ENCODE measurements at regions of chr1 and their contacts with region 1.

Region 1: DNA sequence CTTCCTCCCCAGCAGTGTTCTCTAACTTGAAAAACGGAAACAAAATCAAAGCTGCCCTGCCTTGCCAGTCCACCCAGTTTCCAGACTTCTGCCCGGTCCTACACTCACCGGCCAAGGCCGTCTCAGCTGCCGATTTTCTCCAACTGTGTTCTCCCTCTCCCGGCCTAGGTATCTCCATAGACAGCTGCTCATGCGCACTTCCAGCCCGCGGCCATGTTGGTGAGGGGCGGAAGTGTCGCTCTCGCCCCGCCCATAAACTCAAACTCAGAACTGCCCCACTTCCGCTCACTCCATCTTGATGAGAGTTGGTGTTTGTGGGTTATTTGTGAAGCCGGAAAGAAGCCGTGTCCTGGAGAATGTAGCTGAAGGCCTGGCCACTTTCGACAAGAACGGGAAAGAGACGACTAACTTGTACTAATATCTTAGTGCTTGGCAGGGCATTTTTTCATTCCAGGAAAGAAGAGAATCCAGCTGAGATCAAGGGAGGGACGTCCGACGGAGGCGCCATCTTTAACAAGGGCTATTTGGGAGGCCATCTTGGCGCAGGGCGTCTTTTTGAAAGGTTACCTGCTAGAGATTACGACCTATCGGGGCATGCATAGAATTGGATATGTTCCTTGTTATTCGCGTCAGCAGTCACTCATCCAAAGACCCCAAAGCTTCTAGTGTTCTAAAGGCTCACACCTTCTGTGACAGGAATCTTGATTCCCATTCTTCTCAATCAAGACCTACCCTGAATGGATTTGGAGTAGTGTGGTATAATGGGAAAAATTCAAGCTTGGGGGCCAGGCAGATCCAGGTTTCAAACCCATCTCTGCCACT is at the start of gene USF1:
- DNase-seq: peak; percentile 92
- H3K4me3 Mint-ChIP-seq: peak within 1 kb of the TSS; percentile 94
- H3K27ac Mint-ChIP-seq: peak within 1 kb of the TSS; percentile 97
- H3K4me1 Mint-ChIP-seq: peaks cover 55% of the 10 kb centered on the region
- H3K27me3 Mint-ChIP-seq: no peaks in the 10 kb centered on the region
- total RNA-seq, gene USF1: 50.6 and 51.5 TPM in 2 replicates

Region 2: GRCh38 chr1:159924981-159925712 is 1120.8 kb before region 1 on chr1 and contains the start of gene TAGLN2:
- intact Hi-C with region 1: loop called (anchors 10 kb)
- DNase-seq: peak; percentile 92
- H3K4me3 Mint-ChIP-seq: peak within 1 kb of the TSS; percentile 94
- H3K27ac Mint-ChIP-seq: peak within 1 kb of the TSS; percentile 99
- H3K4me1 Mint-ChIP-seq: peaks cover 57% of the 10 kb centered on the region
- H3K27me3 Mint-ChIP-seq: peaks cover 1% of the 10 kb centered on the region
- total RNA-seq, gene TAGLN2: 442 and 461 TPM in 2 replicates

Region 3: DNA sequence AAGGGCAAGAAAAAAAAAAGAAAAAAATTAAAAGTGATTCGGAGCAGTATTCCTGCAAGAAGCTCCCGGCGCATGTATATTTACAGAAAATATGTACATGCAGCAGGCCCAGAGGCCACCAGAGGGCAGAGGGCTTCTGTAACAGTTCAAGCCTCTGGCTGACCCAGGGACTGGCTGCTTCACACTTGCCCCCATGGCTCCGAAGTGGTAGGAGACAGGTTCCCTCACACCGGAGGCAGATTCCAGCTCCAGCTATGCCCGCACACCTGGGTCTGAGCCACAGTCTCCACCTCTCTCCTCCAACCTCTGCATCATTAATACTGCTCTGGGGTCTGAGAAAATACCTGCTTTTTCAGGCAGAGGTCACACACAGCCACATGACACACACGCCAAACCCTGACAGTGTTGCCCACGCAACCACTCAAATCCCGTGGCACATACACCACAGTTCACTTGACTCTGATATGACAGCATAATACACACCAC is 26.0 kb after region 1 on chr1:
- intact Hi-C with region 1: loop called (anchors 1 kb)
- DNase-seq: peak; percentile 24
- H3K4me3 Mint-ChIP-seq: no peak overlapping the region
- H3K27ac Mint-ChIP-seq: peak overlapping the region; percentile 47
- H3K4me1 Mint-ChIP-seq: peaks cover 49% of the 10 kb centered on the region
- H3K27me3 Mint-ChIP-seq: no peaks in the 10 kb centered on the region

Region 4: DNA sequence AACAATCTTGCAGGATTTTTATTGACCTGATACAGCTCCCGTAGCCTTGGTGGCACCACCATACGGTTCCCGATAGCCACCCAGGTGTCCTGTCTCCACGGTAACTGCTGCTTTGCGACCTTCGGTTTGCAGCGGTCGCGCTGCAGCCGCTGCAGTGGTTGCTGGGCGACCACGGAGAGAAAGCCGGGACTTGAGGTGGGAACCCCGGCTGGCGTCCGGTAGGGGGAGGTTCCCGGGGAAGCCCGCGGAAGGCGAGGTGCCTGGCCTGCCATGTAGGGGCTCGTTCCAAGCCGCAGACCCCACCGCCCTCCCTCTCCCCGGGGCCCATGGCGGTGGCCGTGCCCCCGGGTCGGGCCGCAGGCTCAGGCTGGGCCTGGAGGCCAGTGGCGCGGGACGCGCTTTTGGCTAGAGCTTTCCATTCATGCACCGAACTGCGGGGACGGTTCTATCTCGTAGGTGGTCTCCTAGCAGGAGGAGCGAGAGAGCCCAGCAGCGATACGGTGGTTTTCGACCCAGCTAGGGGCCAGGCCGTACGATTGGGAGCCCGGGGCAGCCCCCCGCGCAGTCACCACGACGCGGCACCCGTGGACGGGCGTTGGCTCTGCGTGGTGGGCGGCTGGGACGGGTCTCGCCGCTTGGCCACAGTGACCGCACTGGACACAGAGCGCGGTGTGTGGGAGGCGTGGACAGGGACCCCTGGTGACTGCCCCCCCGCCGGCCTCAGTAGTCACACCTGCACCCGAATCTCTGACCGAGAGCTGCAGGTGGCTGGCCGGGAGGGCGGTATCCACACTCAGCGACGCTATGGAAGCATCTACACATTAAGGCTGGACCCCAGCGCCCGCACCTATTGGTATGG is 52.5 kb after region 1 on chr1 and contains the start of gene KLHDC9:
- intact Hi-C with region 1: loop called (anchors 1 kb)
- DNase-seq: peak; percentile 68
- H3K4me3 Mint-ChIP-seq: peak within 1 kb of the TSS; percentile 80
- H3K27ac Mint-ChIP-seq: peak within 1 kb of the TSS; percentile 96
- H3K4me1 Mint-ChIP-seq: peaks cover 39% of the 10 kb centered on the region
- H3K27me3 Mint-ChIP-seq: peaks cover 2% of the 10 kb centered on the region
- total RNA-seq, gene KLHDC9: not detected in 2 replicates

Region 5: GRCh38 chr1:161159087-161159912 is 113.3 kb after region 1 on chr1 and contains the start of gene USP21:
- intact Hi-C with region 1: loop called (anchors 2 kb)
- DNase-seq: peak; percentile 91
- H3K4me3 Mint-ChIP-seq: peak within 1 kb of the TSS; percentile 88
- H3K27ac Mint-ChIP-seq: peak within 1 kb of the TSS; percentile 86
- H3K4me1 Mint-ChIP-seq: peaks cover 64% of the 10 kb centered on the region
- H3K27me3 Mint-ChIP-seq: no peaks in the 10 kb centered on the region
- total RNA-seq, gene USP21: 32.9 and 38.2 TPM in 2 replicates

Region 6: DNA sequence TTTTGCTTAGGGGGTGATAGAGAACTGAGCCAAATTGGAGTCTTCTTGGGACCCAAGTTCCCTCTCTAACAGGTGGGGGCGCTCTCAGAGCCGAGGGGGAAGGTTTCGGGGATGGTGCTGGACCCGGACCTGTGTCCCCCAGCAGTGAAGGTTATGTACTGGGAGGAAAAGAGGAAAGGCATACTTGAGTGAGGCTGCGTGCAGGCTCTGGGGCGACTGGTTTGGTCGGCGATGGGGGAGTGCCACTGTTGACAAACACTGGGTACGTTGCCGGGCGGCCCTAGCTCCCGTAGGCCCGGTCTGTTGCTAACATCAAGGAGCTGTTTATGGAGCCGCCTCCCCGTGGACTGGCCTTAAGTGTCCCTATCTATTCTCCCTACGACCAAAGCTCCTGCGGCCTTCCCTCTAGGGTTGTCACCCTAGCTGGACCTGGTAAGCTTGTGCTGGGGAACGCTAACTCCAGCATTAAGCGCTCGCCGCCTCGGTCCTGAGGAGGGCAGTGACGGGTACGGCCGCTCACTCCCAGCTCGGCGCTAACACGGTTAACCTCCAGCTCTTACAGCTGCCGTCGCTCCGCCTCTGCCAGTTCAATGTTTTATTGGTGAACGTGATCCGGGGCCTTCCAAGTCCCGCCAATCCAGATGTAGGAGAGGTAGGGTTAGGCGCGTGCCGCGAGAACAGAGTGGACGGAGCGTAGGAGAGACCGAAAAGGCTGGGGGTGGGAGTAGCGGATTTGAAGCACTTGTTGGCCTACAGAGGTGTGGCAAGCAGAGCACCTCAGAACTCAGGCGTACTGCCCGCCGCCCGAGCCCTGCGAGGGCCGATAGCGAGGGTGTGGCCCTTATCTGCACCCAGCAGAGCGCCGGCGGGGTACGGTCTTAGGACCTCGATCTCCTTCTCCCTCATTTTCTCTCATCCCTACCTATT is 120.0 kb after region 1 on chr1 and contains the start of gene PPOX:
- intact Hi-C with region 1: loop called (anchors 1 kb)
- DNase-seq: peak; percentile 95
- H3K4me3 Mint-ChIP-seq: peak within 1 kb of the TSS; percentile 87
- H3K27ac Mint-ChIP-seq: peak within 1 kb of the TSS; percentile 99
- H3K4me1 Mint-ChIP-seq: peaks cover 61% of the 10 kb centered on the region
- H3K27me3 Mint-ChIP-seq: no peaks in the 10 kb centered on the region
- total RNA-seq, gene PPOX: 25.1 and 26.0 TPM in 2 replicates

Region 7: DNA sequence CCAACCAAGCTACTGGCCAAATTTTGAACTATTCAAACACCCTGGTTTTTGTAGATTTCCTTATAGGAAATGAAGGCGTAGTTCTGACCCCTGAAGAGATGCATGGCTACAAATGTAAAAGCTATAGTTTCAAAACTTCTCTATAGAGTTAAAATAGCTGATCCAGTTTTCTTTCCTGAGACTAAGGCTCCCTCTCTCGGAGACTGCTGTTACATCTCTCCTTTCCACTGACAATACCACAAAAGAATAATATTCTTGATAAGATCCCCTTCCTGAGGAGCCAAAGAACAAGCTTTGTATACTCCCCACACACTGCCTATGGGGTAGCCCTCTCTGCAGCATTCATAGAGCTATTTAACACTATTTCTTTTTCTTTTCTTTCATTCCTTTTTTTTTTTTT is 328.4 kb after region 1 on chr1:
- intact Hi-C with region 1: no loop called
- DNase-seq: no peak
- H3K4me3 Mint-ChIP-seq: no peak overlapping the region
- H3K27ac Mint-ChIP-seq: no peak overlapping the region
- H3K4me1 Mint-ChIP-seq: peaks cover 8% of the 10 kb centered on the region
- H3K27me3 Mint-ChIP-seq: no peaks in the 10 kb centered on the region